Sigmoid colon (tissue), 7 donors: ENCODE measurements at regions of chr3 and their contacts with region 1.

Region 1: GRCh38 chr3:38479431-38480092 is 16.6 kb upstream of the EXOG start:
- DNase-seq: peak; percentile 83
- H3K4me3 ChIP-seq: no peak overlapping the region
- H3K27ac ChIP-seq: no peak overlapping the region
- H3K4me1 ChIP-seq: no peaks in the 10 kb centered on the region
- H3K27me3 ChIP-seq: no peaks in the 10 kb centered on the region
- CTCF ChIP-seq: peak; percentile 47 to 84 (median 74)
- EP300 ChIP-seq: no peak
- POLR2A ChIP-seq: no peak

Region 2: GRCh38 chr3:38117748-38118420 is 361.7 kb before region 1 on chr3:
- intact Hi-C with region 1: loop called (anchors 10 kb)
- DNase-seq: peak; percentile 73
- H3K4me3 ChIP-seq: no peak overlapping the region
- H3K27ac ChIP-seq: no peak overlapping the region
- H3K4me1 ChIP-seq: peaks cover 0 to 7% (median 3%) of the 10 kb centered on the region in 4 donors
- H3K27me3 ChIP-seq: no peaks in the 10 kb centered on the region
- CTCF ChIP-seq: peak; percentile 27 to 60 (median 54)
- EP300 ChIP-seq: no peak
- POLR2A ChIP-seq: no peak

Region 3: GRCh38 chr3:38346587-38347410 is 132.8 kb before region 1 on chr3 and contains the start of gene XYLB:
- intact Hi-C with region 1: loop called (anchors 2 kb)
- DNase-seq: peak; percentile 90
- H3K4me3 ChIP-seq: peak within 1 kb of the TSS; percentile 43 to 80 (median 70)
- H3K27ac ChIP-seq: peak within 1 kb of the TSS; percentile 31 to 72 (median 68)
- H3K4me1 ChIP-seq: peaks cover 0 to 15% (median 13%) of the 10 kb centered on the region in 4 donors
- H3K27me3 ChIP-seq: no peaks in the 10 kb centered on the region
- CTCF ChIP-seq: peak; percentile 80 to 89 (median 86)
- EP300 ChIP-seq: no peak
- POLR2A ChIP-seq: peak in 1 of 2 donors; percentile 18
- total RNA-seq, gene XYLB: 2.3 to 3.2 (median 2.4) TPM

Region 4: GRCh38 chr3:38404286-38404685 is 75.3 kb before region 1 on chr3:
- intact Hi-C with region 1: no loop called
- DNase-seq: peak; percentile 86
- H3K4me3 ChIP-seq: no peak overlapping the region
- H3K27ac ChIP-seq: peak overlapping the region in 3 of 4 donors; percentile 7 to 50 (median 20)
- H3K4me1 ChIP-seq: no peaks in the 10 kb centered on the region
- H3K27me3 ChIP-seq: no peaks in the 10 kb centered on the region
- CTCF ChIP-seq: no peak
- EP300 ChIP-seq: no peak
- POLR2A ChIP-seq: no peak

Region 5: GRCh38 chr3:39639344-39640236 is 1160.0 kb after region 1 on chr3:
- intact Hi-C with region 1: no loop called
- DNase-seq: no peak
- H3K4me3 ChIP-seq: no peak overlapping the region
- H3K27ac ChIP-seq: no peak overlapping the region
- H3K4me1 ChIP-seq: peaks cover 0 to 10% (median 3%) of the 10 kb centered on the region in 4 donors
- H3K27me3 ChIP-seq: no peaks in the 10 kb centered on the region
- CTCF ChIP-seq: no peak
- EP300 ChIP-seq: no peak
- POLR2A ChIP-seq: no peak